Heart right ventricle (tissue), 16 donors: ENCODE measurements at regions of chr10 and their contacts with region 1.

Region 1: DNA sequence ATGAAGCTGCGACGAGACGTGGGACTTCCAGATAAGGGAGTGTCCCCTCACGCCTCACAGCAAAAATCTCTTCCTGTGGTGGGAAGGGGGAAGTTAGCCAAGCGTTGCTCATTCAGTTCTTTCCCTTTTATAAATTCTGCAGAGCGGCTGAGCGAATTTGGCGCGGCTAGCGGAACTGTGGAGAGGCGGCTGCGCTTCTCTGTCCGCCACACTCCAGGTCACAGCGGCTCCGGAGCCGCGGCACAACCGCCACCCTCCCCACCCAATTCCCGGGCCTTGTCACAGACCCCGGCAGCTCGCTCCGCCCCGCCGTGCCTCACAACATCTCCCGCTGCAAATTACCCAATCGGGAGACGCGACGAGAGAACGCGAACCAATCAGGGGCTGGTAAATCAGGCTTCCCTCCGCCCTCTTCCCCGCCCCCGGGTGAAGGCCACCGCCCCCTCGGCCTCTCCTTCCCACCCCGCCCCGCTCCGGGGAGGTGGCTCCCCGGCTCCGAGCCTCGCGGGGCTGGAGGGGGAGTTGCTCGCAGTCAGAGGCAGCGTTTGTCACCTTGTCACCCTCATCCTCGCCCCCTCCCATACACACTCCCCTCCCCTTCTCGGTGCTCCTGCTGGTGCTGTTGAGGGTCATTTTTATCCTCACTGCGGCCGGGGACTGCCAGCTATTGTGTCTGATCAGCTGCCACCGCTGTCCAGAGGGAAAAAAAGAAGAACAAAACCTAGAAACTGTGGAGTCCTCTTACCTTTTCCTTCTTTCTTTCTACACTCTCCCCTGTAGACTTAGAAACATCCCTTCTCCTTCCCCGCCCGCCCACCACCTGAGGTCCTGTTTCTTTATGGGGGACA is 918 bp upstream of the ARHGAP21 start:
- DNase-seq: peak; percentile 97 to 98
- ATAC-seq: peak; percentile 92 to 96 (median 96)
- H3K4me3 ChIP-seq: peak overlapping the region; percentile 70 to 94 (median 86)
- H3K27ac ChIP-seq: peak overlapping the region; percentile 96 to 99 (median 98)
- H3K4me1 ChIP-seq: peaks cover 0 to 35% (median 25%) of the 10 kb centered on the region in 9 donors
- H3K27me3 ChIP-seq: no peaks in the 10 kb centered on the region
- CTCF ChIP-seq: no peak

Region 2: DNA sequence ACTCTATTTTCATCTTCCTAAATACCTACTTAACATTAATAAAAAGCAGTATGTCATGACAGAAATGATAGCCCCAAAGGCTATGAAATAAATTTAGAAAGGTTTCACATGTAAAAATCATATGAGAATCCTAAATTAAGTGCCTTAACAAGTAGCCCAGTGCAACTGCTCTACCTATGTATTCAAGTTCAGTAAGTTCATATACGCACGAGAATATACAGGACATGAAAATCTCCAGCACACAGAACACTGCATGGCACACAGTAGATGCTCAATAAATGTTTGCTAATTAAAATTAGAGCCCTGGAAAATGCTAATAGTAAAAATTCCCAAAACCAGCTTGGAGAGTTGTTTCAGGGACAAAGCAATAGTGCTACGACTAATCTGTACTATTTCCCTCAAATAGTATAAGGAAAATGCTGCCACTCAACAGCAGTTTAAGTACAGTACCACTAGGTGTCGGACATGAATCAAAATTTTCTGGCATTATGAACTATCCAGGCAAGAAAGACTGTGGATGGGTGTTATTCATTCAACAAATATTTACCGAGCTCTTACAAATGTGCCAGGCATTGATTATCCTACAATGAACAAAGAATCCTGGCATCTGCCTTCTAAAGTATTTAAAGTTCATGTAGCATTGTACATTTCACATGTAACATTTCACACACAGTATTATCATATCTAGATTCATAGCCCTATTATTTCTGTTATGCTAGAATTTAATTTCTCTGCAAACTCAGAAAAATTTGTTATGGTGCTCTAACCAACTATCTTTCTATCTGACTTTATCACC is 81.8 kb before region 1 on chr10:
- intact Hi-C with region 1: loop called (anchors 2 to 10 kb)
- DNase-seq: peak in 1 of 2 donors; percentile 41
- ATAC-seq: peak; percentile 62 to 91 (median 88)
- H3K4me3 ChIP-seq: no peak overlapping the region
- H3K27ac ChIP-seq: no peak overlapping the region
- H3K4me1 ChIP-seq: peaks cover 0 to 48% (median 25%) of the 10 kb centered on the region in 9 donors
- H3K27me3 ChIP-seq: no peaks in the 10 kb centered on the region
- CTCF ChIP-seq: peak; percentile 57 to 88 (median 77)

Region 3: DNA sequence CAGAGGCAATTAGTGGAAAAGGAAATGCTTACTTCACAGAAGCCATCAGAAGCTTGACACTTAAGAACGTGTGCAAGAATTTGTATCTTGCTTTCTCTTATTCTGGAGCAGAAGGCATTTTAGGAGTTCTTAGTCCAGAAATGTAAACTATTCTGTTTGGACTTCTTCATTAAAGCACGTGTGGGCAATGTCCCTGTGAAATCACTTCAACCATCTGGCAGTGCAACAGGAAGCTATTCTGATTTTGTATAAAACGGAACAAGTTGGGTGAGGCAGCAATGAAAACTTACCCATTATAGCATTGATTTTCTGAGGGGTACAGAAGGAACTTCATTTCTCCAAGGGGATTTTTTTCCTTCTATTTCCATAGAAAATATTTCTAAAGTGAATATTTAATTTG is 20.3 kb after region 1 on chr10:
- intact Hi-C with region 1: no loop called
- DNase-seq: no peak
- ATAC-seq: no peak
- H3K4me3 ChIP-seq: no peak overlapping the region
- H3K27ac ChIP-seq: no peak overlapping the region
- H3K4me1 ChIP-seq: no peaks in the 10 kb centered on the region
- H3K27me3 ChIP-seq: no peaks in the 10 kb centered on the region
- CTCF ChIP-seq: no peak

Region 4: DNA sequence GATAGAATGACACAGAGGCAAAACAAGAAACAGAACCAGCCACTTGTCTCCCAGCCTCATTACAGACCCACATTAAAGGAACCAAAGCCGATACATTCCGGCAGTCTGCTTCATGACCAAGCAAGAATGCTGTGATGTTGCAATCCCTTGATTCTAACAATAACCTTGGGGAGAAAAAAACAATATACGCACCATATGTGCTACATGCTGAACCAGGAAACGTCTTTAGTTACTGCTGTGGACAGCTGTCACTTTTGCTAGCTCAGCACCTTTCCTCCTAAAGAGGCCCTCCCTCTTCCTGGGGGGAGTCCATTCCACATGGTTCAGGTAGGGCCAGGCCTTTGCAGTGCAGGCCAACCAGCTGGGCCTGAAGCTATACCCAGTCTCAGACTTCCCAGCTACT is 148.7 kb after region 1 on chr10:
- intact Hi-C with region 1: loop called in 2 of 10 experiments (anchors 10 kb)
- DNase-seq: no peak
- ATAC-seq: peak in 7 of 8 donors; percentile 69 to 86 (median 75)
- H3K4me3 ChIP-seq: no peak overlapping the region
- H3K27ac ChIP-seq: peak overlapping the region in 5 of 10 donors; percentile 8 to 69 (median 34)
- H3K4me1 ChIP-seq: peaks cover 0 to 32% (median 5%) of the 10 kb centered on the region in 9 donors
- H3K27me3 ChIP-seq: no peaks in the 10 kb centered on the region
- CTCF ChIP-seq: no peak

Region 5: DNA sequence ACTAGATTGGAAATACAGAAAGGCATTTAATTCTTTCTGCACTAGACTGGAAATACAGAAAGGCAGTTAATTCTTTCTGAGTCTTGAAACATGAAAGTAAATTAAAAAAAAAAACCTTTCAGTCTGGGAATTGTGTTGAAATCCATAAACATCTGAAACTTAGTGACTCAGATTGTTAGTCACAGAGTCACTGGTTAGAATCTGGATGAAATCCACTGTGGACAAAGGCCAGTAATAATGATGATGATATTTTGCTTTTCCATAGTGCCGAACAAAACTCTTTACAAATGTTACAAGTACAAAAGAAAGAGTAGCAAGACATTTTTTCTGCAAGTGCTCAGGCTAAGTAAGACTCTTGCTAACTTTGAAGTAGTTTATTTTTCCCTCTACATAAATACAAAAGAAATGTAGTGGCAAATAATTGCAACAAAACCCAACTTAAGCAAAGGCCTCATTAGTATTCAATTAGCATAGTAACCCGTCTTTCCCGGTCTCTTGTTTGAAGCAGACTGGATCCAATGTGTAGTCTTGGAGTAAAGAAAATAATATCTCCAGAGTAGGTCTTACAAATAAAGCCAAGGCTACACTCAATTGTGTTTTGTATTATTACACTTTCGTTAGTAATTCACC is 233.6 kb after region 1 on chr10:
- intact Hi-C with region 1: loop called in 6 of 10 experiments (anchors 5 to 10 kb)
- DNase-seq: peak in 1 of 2 donors; percentile 25
- ATAC-seq: peak in 7 of 8 donors; percentile 57 to 81 (median 68)
- H3K4me3 ChIP-seq: no peak overlapping the region
- H3K27ac ChIP-seq: peak overlapping the region; percentile 61 to 78 (median 68)
- H3K4me1 ChIP-seq: peaks cover 0 to 27% (median 17%) of the 10 kb centered on the region in 9 donors
- H3K27me3 ChIP-seq: no peaks in the 10 kb centered on the region
- CTCF ChIP-seq: no peak

Region 6: DNA sequence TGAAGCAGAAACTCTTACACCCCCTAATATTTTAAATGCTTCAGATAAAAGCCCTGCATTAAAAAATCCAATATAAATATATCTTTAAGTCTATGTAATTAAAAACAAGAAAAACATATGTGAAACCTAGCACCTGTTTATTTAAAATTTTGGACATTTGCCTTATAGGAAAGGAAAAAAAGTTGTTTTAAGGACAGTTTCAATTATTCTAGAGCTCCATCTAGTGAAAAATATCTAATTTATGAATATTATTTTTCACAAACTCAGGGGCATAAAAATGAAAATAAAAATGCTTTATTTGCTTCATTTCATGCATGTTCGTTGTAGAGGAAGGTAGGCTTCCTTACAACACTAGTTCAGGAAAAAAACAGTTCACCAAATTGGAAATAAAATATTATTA is 265.3 kb after region 1 on chr10:
- intact Hi-C with region 1: loop called in 4 of 10 experiments (anchors 10 kb)
- DNase-seq: no peak
- ATAC-seq: no peak
- H3K4me3 ChIP-seq: no peak overlapping the region
- H3K27ac ChIP-seq: no peak overlapping the region
- H3K4me1 ChIP-seq: peaks cover 0 to 17% (median 4%) of the 10 kb centered on the region in 9 donors
- H3K27me3 ChIP-seq: no peaks in the 10 kb centered on the region
- CTCF ChIP-seq: peak in 6 of 9 donors; percentile 36 to 55 (median 44)

Region 7: GRCh38 chr10:25080880-25081581 is 356.4 kb after region 1 on chr10:
- intact Hi-C with region 1: loop called in 6 of 10 experiments (anchors 5 to 10 kb)
- DNase-seq: peak; percentile 66 to 92
- ATAC-seq: peak; percentile 93 to 97 (median 95)
- H3K4me3 ChIP-seq: no peak overlapping the region
- H3K27ac ChIP-seq: peak overlapping the region in 7 of 10 donors; percentile 3 to 81 (median 54)
- H3K4me1 ChIP-seq: peaks cover 0 to 28% (median 13%) of the 10 kb centered on the region in 9 donors
- H3K27me3 ChIP-seq: no peaks in the 10 kb centered on the region
- CTCF ChIP-seq: peak; percentile 73 to 97 (median 91)